Activated CD4-positive, alpha-beta memory T cell treated with anti-CD3 and anti-CD28 coated beads, Interleukin-2, amount 10 ng/mL, durations not matched to agents 7 days and 5 days (primary cell): ENCODE measurements at regions of chr20 and their contacts with region 1.

Region 1: DNA sequence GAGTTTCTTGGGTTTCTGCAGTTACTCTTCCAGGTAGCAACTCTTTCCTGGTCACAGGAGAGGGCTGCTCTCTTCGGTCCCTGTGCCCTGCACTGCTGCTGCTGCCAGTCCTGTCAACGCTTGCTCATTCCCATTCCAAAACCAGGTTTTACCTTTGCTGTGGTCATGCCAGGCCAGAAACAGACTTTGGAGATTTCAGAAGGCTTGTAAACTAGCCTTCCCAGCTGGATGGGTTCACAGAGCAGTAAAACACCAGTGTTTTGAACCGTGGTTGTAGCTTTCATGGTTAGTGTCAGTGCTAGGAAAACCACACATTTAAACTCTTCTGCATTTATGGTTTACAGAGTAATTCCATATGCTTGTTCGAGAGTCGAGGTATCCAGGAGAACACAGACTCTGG is 16.2 kb downstream of the ARFGEF2 start:
- DNase-seq: no peak
- H3K4me3 Mint-ChIP-seq: no peak overlapping the region
- H3K27ac Mint-ChIP-seq: no peak overlapping the region
- H3K4me1 Mint-ChIP-seq: peaks cover 24% of the 10 kb centered on the region
- H3K27me3 Mint-ChIP-seq: no peaks in the 10 kb centered on the region

Region 2: GRCh38 chr20:48921151-48921898 is 16.3 kb before region 1 on chr20 and contains the start of gene ARFGEF2:
- CTCF ChIA-PET with region 1: no interaction called
- POLR2A ChIA-PET with region 1: interaction called, 11 read pairs
- DNase-seq: peak; percentile 94
- H3K4me3 Mint-ChIP-seq: peak within 1 kb of the TSS; percentile 90
- H3K27ac Mint-ChIP-seq: peak within 1 kb of the TSS; percentile 87
- H3K4me1 Mint-ChIP-seq: peaks cover 38% of the 10 kb centered on the region
- H3K27me3 Mint-ChIP-seq: peaks cover 4% of the 10 kb centered on the region
- total RNA-seq, gene ARFGEF2: 18.1 to 20.7 TPM

Region 3: GRCh38 chr20:49460916-49461315 is 523.2 kb after region 1 on chr20:
- CTCF ChIA-PET with region 1: no interaction called
- POLR2A ChIA-PET with region 1: no interaction called
- DNase-seq: no peak
- H3K4me3 Mint-ChIP-seq: no peak overlapping the region
- H3K27ac Mint-ChIP-seq: no peak overlapping the region
- H3K4me1 Mint-ChIP-seq: no peaks in the 10 kb centered on the region
- H3K27me3 Mint-ChIP-seq: peaks cover 35% of the 10 kb centered on the region